GM10248 (cell line): ENCODE measurements at regions of chr14 and their contacts with region 1.

Region 1: GRCh38 chr14:39469094-39469710 is 37.0 kb upstream of the FBXO33 start:
- DNase-seq: no peak
- CTCF ChIP-seq: peak; percentile 77

Region 2: GRCh38 chr14:39232554-39233415 is 236.4 kb before region 1 on chr14:
- CTCF ChIA-PET with region 1: interaction called, 25 read pairs
- POLR2A ChIA-PET with region 1: no interaction called
- DNase-seq: peak; percentile 23
- CTCF ChIP-seq: no peak

Region 3: GRCh38 chr14:39406560-39406959 is 62.6 kb before region 1 on chr14:
- CTCF ChIA-PET with region 1: no interaction called
- POLR2A ChIA-PET with region 1: no interaction called
- DNase-seq: no peak
- CTCF ChIP-seq: no peak

Region 4: DNA sequence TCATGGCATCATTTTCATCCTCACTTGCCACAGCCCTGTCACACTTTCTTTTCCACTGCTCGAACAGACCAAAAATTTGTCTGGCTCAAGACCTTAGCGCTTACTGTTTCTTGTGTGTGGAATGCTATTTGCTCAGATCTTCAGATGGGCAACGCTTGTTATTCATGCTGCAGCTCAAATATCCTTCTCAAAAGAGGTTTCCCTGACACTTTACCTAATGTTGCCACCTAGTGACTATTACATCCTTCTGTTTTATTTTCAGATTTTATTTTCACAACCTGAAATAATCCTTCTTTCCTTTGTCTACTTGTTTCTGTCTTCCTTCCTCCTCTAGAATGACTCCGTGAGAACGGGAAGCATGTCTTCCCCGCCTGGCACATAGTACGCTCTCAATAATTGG is 42.6 kb before region 1 on chr14:
- CTCF ChIA-PET with region 1: interaction called, 24 read pairs
- POLR2A ChIA-PET with region 1: no interaction called
- DNase-seq: no peak
- CTCF ChIP-seq: peak; percentile 12

Region 5: DNA sequence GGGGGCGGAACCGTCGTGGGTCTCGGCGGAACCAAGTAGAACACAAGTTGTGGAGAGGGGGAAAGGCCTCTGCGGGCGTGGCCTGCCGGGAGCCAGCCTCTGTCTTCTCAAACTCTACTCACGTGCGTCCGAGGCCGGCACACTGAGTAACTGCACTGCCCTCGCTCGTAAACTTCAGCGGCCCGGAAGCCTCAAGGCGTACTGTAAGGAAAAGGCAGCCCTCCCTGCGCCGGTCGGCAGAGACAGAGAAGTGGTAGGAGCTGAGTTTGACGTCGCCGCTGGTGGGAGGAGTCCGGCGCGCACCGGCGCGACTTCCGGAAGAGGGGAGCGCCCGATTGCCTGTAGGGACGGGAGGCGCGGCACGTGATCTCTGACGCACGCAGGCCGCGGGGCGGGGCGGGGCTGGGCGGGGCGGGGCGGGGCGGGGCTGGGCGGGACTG is 37.0 kb before region 1 on chr14 and contains the start of gene FBXO33:
- CTCF ChIA-PET with region 1: interaction called, 24 read pairs
- POLR2A ChIA-PET with region 1: no interaction called
- DNase-seq: peak; percentile 96
- CTCF ChIP-seq: no peak

Region 6: DNA sequence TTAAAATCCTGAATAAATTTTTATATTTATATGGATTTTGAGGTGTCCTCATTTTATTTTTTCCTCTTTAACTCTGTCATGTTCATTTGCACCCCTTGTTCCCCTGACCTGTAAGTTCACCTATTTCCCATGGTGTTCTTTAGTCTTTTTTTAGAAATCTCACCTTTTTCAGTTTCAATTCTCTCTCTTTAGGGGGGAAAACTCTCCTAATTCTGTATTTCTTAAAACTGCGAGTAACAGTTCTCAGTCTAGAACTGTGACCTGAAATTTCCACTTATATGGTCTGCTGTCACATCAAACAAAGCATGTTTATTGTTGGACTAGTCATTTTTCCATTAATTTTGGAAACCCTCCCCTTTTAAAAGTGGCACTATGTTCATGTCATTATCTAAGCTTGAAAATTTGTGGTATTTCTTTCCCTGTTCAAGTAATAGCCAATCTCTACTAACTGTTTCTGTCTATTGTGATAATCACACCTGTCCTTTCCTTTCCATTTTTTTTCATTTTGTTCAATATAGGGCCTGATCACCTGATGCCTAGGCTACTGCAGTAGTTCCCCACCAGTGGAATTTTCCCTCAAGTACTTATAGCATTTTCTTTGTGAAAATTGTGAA is 23.0 kb before region 1 on chr14:
- CTCF ChIA-PET with region 1: interaction called, 46 read pairs
- POLR2A ChIA-PET with region 1: no interaction called
- DNase-seq: no peak
- CTCF ChIP-seq: no peak

Region 7: DNA sequence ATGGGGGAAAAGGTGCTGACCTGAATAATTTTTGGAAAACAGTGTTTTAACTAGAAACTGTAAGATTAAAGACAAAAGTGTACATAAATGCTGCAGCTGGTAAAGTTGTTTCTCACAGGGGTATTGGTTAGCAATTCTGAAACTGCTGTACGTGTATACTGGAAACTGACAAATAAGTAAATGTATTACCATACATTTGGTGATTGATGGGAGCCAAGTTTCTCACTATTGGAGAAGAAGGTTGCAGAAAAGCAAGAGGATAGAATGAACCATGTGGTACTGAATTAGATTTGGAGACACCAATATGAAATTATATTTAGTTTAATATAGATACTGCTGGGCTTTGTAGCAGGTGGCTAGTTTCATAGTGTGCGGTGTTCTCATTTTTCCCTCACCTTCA is 17.4 kb before region 1 on chr14:
- CTCF ChIA-PET with region 1: interaction called, 46 read pairs
- POLR2A ChIA-PET with region 1: no interaction called
- DNase-seq: no peak
- CTCF ChIP-seq: no peak

Region 8: DNA sequence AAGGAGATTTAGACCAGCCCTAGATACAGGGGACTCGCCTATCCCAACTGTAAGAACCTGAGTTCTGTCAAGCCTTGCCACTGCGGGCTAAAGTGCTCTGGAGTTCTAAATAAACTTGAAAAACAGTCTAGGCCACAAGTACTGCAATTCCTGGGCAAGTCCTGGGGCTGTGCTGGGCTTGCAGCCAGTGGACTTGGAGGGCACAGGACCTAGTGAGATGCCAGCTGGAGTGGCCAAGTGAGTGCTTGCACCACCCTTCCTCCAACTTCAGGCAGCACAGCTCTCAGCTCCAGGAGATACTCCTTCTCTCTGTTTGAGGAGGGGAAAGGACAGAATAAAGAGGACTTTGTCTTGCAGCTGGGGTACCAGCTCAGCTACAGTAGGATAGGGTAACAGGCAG is 270.6 kb after region 1 on chr14:
- CTCF ChIA-PET with region 1: no interaction called
- POLR2A ChIA-PET with region 1: no interaction called
- DNase-seq: no peak
- CTCF ChIP-seq: no peak